IMR-90 (cell line): ENCODE measurements at regions of chr4 and their contacts with region 1.

Region 1: DNA sequence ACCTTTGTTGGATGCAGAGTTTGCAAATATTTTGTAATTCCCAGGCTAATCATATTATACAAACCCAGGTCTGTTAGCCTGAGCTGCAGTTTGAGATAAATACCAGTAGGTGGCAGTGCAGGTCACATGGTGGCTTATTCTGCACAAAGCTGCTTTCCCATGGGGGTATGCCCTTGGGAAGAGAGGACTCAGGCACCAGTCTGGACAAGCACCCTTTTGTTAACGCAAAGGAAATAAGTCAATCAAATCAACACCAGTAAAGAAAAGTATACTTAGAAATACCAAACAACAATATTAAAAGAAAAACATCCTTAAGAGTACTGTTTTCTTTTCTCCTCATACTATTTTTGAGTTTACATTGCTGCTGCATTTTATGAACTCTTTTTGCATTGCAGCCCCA is 389.0 kb upstream of the ZFP42 start:
- DNase-seq: peak; percentile 69
- ATAC-seq: peak; percentile 64
- H3K4me3 ChIP-seq: no peak overlapping the region
- H3K27ac ChIP-seq: peak overlapping the region; percentile 55; the same call in 1 of the 2 replicates
- H3K4me1 ChIP-seq: peaks cover 11% of the 10 kb centered on the region
- H3K27me3 ChIP-seq: no peaks in the 10 kb centered on the region
- CTCF ChIP-seq: peak; percentile 86
- POLR2A ChIP-seq: no peak
- RAD21 ChIP-seq: peak; percentile 90

Region 2: GRCh38 chr4:186936496-186937375 is 669.8 kb before region 1 on chr4:
- CTCF ChIA-PET with region 1: interaction called, 12 read pairs
- POLR2A ChIA-PET with region 1: no interaction called
- dilution Hi-C with region 1: no loop called
- in situ Hi-C with region 1: no loop called
- intact Hi-C with region 1: no loop called
- DNase-seq: peak; percentile 88
- ATAC-seq: peak; percentile 76
- H3K4me3 ChIP-seq: peak overlapping the region; percentile 43; the same call in 1 of the 2 replicates
- H3K27ac ChIP-seq: peak overlapping the region; percentile 60; the same call in 1 of the 2 replicates
- H3K4me1 ChIP-seq: peaks cover 15% of the 10 kb centered on the region
- H3K27me3 ChIP-seq: no peaks in the 10 kb centered on the region
- CTCF ChIP-seq: peak; percentile 47
- POLR2A ChIP-seq: no peak
- RAD21 ChIP-seq: peak; percentile 65

Region 3: DNA sequence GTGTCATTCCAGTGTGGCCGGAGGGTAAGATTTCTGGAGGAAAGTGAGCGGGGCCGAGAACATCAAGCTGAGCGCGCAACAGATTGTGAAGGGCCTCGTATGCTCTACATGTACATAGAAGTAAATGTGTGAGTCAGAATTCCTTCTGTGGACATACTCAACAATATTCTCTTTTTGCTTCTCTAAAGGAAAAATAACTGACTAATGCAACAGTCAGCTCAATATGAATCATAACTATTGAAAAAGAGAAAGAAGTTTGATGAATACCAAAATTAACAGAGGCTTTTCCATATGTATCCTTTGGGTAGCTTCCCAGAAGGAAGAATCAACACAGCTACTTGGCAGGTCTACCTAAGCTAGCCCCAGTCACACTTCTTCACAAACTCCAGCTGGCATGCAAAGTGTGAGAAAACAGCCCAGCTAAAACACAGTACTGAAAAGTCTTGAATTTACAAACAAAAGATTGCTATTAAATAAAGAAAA is 301.5 kb after region 1 on chr4:
- CTCF ChIA-PET with region 1: no interaction called
- POLR2A ChIA-PET with region 1: no interaction called
- dilution Hi-C with region 1: no loop called
- in situ Hi-C with region 1: no loop called
- intact Hi-C with region 1: loop called (anchors 5 kb)
- DNase-seq: peak; percentile 95
- ATAC-seq: peak; percentile 81
- H3K4me3 ChIP-seq: no peak overlapping the region
- H3K27ac ChIP-seq: peak overlapping the region; percentile 95
- H3K4me1 ChIP-seq: peaks cover 6% of the 10 kb centered on the region
- H3K27me3 ChIP-seq: no peaks in the 10 kb centered on the region
- CTCF ChIP-seq: no peak
- POLR2A ChIP-seq: no peak
- RAD21 ChIP-seq: no peak; the same call in 1 of the 2 replicates

Region 4: GRCh38 chr4:188728359-188728758 is 1121.8 kb after region 1 on chr4:
- CTCF ChIA-PET with region 1: no interaction called
- POLR2A ChIA-PET with region 1: no interaction called
- dilution Hi-C with region 1: no loop called
- in situ Hi-C with region 1: no loop called
- intact Hi-C with region 1: loop called (anchors 5 kb)
- DNase-seq: peak; percentile 27
- ATAC-seq: no peak
- H3K4me3 ChIP-seq: no peak overlapping the region
- H3K27ac ChIP-seq: no peak overlapping the region
- H3K4me1 ChIP-seq: no peaks in the 10 kb centered on the region; the same call in 1 of the 2 replicates
- H3K27me3 ChIP-seq: no peaks in the 10 kb centered on the region
- CTCF ChIP-seq: no peak
- POLR2A ChIP-seq: no peak
- RAD21 ChIP-seq: no peak

Region 5: DNA sequence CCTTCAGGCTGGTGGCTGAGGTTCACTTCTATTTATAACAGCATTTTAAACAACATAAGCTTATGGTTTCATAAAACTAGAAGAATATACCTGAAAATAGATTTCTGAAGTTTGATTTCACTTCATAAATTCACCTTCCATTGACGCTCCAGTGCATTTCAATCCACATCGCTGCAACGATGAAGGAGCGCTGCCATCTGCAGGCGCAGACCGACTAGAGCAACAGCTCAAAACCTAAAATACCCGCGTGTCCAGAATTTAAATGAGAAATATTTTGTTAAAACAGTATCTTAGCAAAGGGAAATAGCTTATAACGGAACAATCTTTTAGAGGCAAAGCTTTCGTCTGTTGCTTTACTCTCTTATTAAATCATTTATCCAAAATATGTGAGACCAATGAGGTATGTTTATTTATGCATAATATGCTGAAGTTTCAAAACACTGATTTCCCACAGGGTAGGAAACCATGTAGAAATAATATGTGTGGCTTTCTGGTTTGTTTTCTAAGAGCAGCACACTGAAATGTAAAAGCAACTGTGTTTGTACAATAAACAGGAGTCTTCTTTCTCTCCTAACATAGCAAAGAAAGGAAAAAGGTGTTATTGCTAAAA is 1517.7 kb after region 1 on chr4:
- CTCF ChIA-PET with region 1: no interaction called
- POLR2A ChIA-PET with region 1: no interaction called
- dilution Hi-C with region 1: no loop called
- in situ Hi-C with region 1: no loop called
- intact Hi-C with region 1: loop called (anchors 1 kb)
- DNase-seq: peak; percentile 74
- ATAC-seq: peak; percentile 85
- H3K4me3 ChIP-seq: no peak overlapping the region
- H3K27ac ChIP-seq: peak overlapping the region; percentile 43; the same call in 1 of the 2 replicates
- H3K4me1 ChIP-seq: peaks cover 1% of the 10 kb centered on the region; the same call in 1 of the 2 replicates
- H3K27me3 ChIP-seq: no peaks in the 10 kb centered on the region
- CTCF ChIP-seq: peak; percentile 91
- POLR2A ChIP-seq: no peak
- RAD21 ChIP-seq: peak; percentile 97